Testis (tissue), 5 donors: ENCODE measurements at regions of chr16 and their contacts with region 1.

Region 1: DNA sequence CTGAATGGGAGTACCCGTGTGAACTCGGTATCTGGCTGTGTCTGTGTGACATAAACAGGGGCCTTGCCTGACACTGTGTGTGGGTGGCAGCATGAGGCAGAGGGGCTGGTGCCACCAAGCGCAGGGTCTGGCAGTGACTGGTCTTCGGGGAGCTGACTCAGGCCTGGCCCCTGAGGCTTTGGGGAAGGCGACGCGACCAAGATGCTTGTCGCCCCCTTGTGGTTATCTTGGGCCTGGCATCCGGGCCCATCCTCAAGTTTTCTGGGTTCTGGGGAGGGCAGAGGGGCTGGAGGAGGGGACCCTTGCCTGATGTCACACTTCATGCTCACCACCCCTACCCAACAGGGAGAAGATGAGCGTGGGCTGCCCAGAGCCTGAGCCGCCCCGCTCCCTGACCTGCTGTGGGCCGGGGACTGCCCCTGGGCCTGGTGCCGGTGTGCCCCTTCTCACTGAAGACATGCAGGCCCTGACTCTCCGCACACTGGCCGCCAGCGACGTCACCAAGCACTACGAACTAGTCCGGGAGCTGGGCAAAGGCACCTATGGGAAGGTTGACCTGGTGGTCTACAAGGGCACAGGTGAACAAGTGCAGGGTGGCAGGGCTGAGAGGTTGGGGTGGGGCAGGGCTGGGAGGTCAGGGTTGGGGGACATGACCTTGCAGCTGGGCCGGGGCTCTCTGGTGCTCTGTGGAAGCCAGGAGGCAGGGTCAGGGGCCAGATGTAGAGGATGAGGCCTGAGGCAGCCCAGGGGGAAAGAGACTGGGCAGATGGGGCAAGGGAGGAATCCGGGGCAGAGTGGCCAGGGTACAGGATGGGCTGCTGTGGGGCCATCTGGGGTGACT is 24.9 kb downstream of the SBK1 start:
- DNase-seq: peak; percentile 70
- H3K4me3 ChIP-seq: no peak overlapping the region
- H3K27ac ChIP-seq: no peak overlapping the region
- H3K4me1 ChIP-seq: no peaks in the 10 kb centered on the region
- H3K27me3 ChIP-seq: no peaks in the 10 kb centered on the region
- CTCF ChIP-seq: peak; percentile 50 to 86 (median 69)
- POLR2A ChIP-seq: no peak

Region 2: DNA sequence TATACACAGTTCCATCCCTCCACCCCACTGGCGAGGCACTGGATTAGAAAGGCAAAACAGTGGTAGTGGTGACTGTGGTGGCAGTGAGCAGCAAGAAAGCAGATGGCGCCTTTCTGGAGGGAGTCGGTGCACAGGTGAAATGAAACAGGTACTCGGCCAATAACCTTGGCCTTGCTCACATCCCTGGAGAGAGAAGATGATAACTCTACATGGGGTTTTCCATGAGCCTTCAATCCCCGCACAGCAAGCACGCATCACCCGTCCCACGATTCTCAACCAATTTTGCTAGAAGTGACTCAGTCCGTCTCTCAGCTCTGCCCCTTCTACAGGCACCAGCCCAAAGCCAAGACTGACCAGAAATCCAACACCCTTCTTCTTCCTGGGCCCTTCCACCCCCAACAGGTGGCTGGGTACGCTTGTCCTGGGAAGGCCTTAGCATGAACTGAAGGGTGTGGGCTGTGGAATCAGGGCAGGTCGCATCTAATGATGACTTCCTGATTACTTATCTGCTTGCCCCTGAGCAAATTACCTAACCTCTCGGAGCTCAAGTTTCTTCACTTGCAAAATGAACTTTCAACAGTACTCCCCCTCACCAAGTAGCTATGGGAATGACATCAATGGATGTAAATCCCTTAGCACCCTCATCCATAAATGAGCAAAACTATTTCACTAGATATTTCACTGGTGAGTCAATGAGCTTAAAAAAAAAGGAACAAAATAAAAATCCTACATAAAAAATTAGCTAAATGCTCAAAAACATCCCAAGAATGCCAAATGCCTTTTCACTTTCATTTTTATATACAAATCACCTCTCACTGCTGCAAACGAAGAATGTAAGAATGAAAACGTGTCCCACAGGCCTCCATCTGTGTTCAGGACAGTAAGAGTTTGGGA is 123.5 kb before region 1 on chr16:
- intact Hi-C with region 1: no loop called
- DNase-seq: no peak
- H3K4me3 ChIP-seq: no peak overlapping the region
- H3K27ac ChIP-seq: no peak overlapping the region
- H3K4me1 ChIP-seq: no peaks in the 10 kb centered on the region
- H3K27me3 ChIP-seq: no peaks in the 10 kb centered on the region
- CTCF ChIP-seq: no peak
- POLR2A ChIP-seq: no peak

Region 3: DNA sequence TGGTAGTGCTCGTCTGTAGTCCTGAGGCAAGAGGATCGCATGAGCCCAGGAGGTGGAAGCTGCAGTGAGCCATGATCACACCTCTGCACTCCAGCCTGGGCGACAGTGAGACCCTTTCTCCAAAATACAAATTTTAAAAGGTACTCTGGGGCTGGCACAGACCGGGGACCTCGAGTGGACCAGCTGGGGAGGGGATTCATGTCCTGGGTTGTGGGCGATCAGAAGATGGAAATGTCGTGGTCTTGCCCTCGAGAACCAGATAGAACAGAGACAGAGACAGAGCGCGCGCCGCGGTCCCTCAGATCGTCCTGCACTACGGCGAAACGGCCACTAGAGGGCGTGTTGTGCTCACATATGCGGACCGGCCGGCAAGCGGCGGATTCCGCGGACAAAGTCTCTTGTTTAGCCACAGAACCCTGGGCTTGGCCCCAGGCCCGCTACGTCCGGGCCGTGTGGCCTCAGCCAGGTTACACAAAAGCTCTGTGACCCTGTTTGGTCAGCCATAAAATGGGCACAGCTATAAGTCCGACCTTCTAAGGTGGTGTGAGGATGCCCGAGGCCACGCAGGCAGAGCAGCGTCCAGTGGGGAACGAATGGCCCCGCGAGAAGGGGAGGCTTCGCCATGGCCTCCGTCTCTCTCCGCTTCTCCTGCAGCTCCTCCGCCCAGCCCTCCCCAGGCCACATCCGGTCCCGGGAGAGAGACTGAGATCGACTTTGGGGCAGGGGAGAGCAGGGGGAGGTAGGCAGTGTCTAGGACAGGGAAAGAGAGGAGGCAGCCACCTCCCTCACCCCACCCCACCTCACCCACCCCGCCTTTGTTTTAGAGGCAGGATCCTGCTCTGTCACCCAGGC is 39.5 kb before region 1 on chr16:
- intact Hi-C with region 1: loop called (anchors 5 kb)
- DNase-seq: peak; percentile 97
- H3K4me3 ChIP-seq: peak overlapping the region; percentile 27 to 62
- H3K27ac ChIP-seq: peak overlapping the region in 1 of 2 donors; percentile 14
- H3K4me1 ChIP-seq: peaks cover 7% of the 10 kb centered on the region
- H3K27me3 ChIP-seq: no peaks in the 10 kb centered on the region
- CTCF ChIP-seq: peak; percentile 96 to 98 (median 96)
- POLR2A ChIP-seq: no peak